CD4-positive, alpha-beta memory T cell (primary cell): ENCODE measurements at regions of chr15 and their contacts with region 1.

Region 1: DNA sequence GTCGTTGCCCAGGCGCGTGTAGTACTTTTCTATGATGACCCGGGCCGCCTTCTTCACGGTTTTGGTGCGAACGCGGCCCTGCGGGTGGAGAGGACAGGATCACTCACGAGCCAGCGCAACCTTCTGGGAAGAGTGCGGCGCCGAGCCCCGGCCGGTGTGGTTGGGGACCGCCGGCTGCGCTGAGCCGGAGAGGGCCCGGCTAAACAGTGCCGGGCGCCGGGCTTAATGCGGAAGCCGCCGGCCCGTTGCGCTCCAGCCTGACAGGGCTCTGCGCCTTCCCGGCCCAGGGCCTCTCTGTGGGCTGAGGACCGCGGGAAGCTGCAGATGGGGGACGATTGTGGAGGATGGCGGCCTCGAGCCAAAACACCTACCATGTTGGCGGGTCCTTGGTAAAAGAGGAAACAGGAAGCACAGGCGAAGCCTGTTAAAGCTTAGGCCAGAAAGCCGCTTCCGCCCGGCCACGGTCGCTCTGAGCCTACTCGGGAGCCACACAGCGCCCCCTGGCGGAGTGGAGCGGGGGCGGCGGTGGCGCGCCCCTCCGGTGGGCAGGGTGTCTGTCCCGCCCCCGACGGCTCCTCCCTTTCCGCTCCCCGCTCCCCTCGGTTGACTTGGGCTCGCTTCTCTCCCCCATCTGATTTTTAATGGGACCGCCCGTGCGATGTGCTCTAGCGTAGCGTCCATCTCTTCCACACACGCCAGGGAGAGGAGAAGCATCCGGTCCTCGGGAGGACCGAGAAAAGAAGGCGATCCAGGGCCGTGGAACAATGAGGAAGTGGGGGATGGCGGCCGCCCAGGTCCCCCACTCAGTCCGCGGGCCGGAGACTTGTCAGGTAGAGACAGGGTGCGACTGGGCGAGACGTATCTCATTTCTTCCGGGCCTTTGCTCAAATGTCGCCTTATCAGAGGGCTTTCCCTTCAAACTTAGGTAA is at the start of gene RPS17:
- DNase-seq: peak; percentile 96 to 99 (median 99)
- H3K4me3 ChIP-seq: peak within 1 kb of the TSS; percentile 73 to 91
- H3K4me3 Mint-ChIP-seq: peak within 1 kb of the TSS; percentile 95 to 99 (median 97)
- H3K27ac ChIP-seq: peak within 1 kb of the TSS; percentile 83
- H3K27ac Mint-ChIP-seq: peak within 1 kb of the TSS; percentile 94 to 98 (median 97)
- H3K4me1 ChIP-seq: peaks cover 26% of the 10 kb centered on the region
- H3K4me1 Mint-ChIP-seq: peaks cover 12 to 39% (median 25%) of the 10 kb centered on the region in 4 donors
- H3K27me3 ChIP-seq: no peaks in the 10 kb centered on the region
- H3K27me3 Mint-ChIP-seq: peaks cover 0 to 2% of the 10 kb centered on the region in 2 donors
- total RNA-seq, gene RPS17: 2,038 to 2,106 TPM

Region 2: GRCh38 chr15:81660976-81661375 is 879.3 kb before region 1 on chr15:
- CTCF ChIA-PET with region 1: no interaction called
- POLR2A ChIA-PET with region 1: no interaction called
- intact Hi-C with region 1: no loop called
- DNase-seq: no peak
- H3K4me3 ChIP-seq: no peak overlapping the region
- H3K4me3 Mint-ChIP-seq: no peak overlapping the region
- H3K27ac ChIP-seq: no peak overlapping the region
- H3K27ac Mint-ChIP-seq: no peak overlapping the region
- H3K4me1 ChIP-seq: no peaks in the 10 kb centered on the region
- H3K4me1 Mint-ChIP-seq: no peaks in the 10 kb centered on the region
- H3K27me3 ChIP-seq: no peaks in the 10 kb centered on the region
- H3K27me3 Mint-ChIP-seq: peaks cover 6 to 7% of the 10 kb centered on the region in 2 donors

Region 3: GRCh38 chr15:82312586-82313349 is 227.6 kb before region 1 on chr15:
- CTCF ChIA-PET with region 1: no interaction called
- POLR2A ChIA-PET with region 1: no interaction called
- intact Hi-C with region 1: no loop called
- DNase-seq: no peak
- H3K4me3 ChIP-seq: no peak overlapping the region
- H3K4me3 Mint-ChIP-seq: no peak overlapping the region
- H3K27ac ChIP-seq: no peak overlapping the region
- H3K27ac Mint-ChIP-seq: peak overlapping the region in 1 of 7 donors; percentile 32
- H3K4me1 ChIP-seq: no peaks in the 10 kb centered on the region
- H3K4me1 Mint-ChIP-seq: peaks cover 0 to 2% (median 0%) of the 10 kb centered on the region in 4 donors
- H3K27me3 ChIP-seq: no peaks in the 10 kb centered on the region
- H3K27me3 Mint-ChIP-seq: peaks cover 0 to 1% of the 10 kb centered on the region in 2 donors

Region 4: GRCh38 chr15:82393671-82394070 is 146.6 kb before region 1 on chr15:
- CTCF ChIA-PET with region 1: no interaction called
- POLR2A ChIA-PET with region 1: no interaction called
- intact Hi-C with region 1: no loop called
- DNase-seq: no peak
- H3K4me3 ChIP-seq: no peak overlapping the region
- H3K4me3 Mint-ChIP-seq: no peak overlapping the region
- H3K27ac ChIP-seq: no peak overlapping the region
- H3K27ac Mint-ChIP-seq: no peak overlapping the region
- H3K4me1 ChIP-seq: no peaks in the 10 kb centered on the region
- H3K4me1 Mint-ChIP-seq: peaks cover 0 to 16% (median 11%) of the 10 kb centered on the region in 4 donors
- H3K27me3 ChIP-seq: no peaks in the 10 kb centered on the region
- H3K27me3 Mint-ChIP-seq: no peaks in the 10 kb centered on the region

Region 5: DNA sequence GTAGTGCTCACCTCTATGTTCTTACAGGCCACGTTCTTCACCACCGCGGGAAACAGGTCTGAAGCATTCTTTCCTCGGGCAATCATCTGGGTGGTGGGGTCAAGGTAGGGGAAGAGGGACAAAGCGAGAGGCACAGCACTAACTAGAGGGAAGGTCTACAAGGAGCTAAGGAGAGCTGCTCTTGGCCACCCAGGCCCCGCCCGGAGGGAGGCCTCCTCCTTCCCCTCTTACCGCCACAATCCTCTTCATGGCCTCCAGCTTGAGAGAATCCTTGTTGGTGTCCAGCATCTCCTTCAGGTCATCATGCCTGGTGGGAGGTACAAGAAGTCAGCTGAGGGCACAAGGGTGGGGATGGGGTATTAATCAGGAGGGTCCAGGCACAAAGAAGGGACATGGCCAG is 148.8 kb after region 1 on chr15:
- CTCF ChIA-PET with region 1: no interaction called
- POLR2A ChIA-PET with region 1: no interaction called
- intact Hi-C with region 1: no loop called
- DNase-seq: no peak
- H3K4me3 ChIP-seq: no peak overlapping the region
- H3K4me3 Mint-ChIP-seq: no peak overlapping the region
- H3K27ac ChIP-seq: no peak overlapping the region
- H3K27ac Mint-ChIP-seq: no peak overlapping the region
- H3K4me1 ChIP-seq: no peaks in the 10 kb centered on the region
- H3K4me1 Mint-ChIP-seq: no peaks in the 10 kb centered on the region
- H3K27me3 ChIP-seq: no peaks in the 10 kb centered on the region
- H3K27me3 Mint-ChIP-seq: peaks cover 4 to 5% of the 10 kb centered on the region in 2 donors

Region 6: GRCh38 chr15:82749951-82750830 is 209.9 kb after region 1 on chr15:
- CTCF ChIA-PET with region 1: interaction called, 4 read pairs
- POLR2A ChIA-PET with region 1: interaction called, 32 read pairs
- intact Hi-C with region 1: loop called (anchors 1 kb)
- DNase-seq: peak; percentile 65 to 87 (median 73)
- H3K4me3 ChIP-seq: peak overlapping the region; percentile 82 to 86
- H3K4me3 Mint-ChIP-seq: peak overlapping the region; percentile 96 to 100 (median 99)
- H3K27ac ChIP-seq: peak overlapping the region; percentile 74
- H3K27ac Mint-ChIP-seq: peak overlapping the region; percentile 77 to 99 (median 95)
- H3K4me1 ChIP-seq: peaks cover 23% of the 10 kb centered on the region
- H3K4me1 Mint-ChIP-seq: peaks cover 26 to 55% (median 40%) of the 10 kb centered on the region in 4 donors
- H3K27me3 ChIP-seq: no peaks in the 10 kb centered on the region
- H3K27me3 Mint-ChIP-seq: no peaks in the 10 kb centered on the region

Region 7: GRCh38 chr15:82985688-82986441 is 445.5 kb after region 1 on chr15 and contains the start of gene RAMAC:
- CTCF ChIA-PET with region 1: interaction called, 12 read pairs
- POLR2A ChIA-PET with region 1: interaction called, 42 read pairs
- intact Hi-C with region 1: loop called (anchors 1 kb)
- DNase-seq: peak; percentile 90 to 98 (median 93)
- H3K4me3 ChIP-seq: peak within 1 kb of the TSS; percentile 87 to 91
- H3K4me3 Mint-ChIP-seq: peak within 1 kb of the TSS; percentile 96 to 99 (median 99)
- H3K27ac ChIP-seq: peak within 1 kb of the TSS; percentile 71
- H3K27ac Mint-ChIP-seq: peak within 1 kb of the TSS; percentile 91 to 99 (median 96)
- H3K4me1 ChIP-seq: peaks cover 18% of the 10 kb centered on the region
- H3K4me1 Mint-ChIP-seq: peaks cover 15 to 32% (median 25%) of the 10 kb centered on the region in 4 donors
- H3K27me3 ChIP-seq: no peaks in the 10 kb centered on the region
- H3K27me3 Mint-ChIP-seq: no peaks in the 10 kb centered on the region
- total RNA-seq, gene RAMAC: 19.3 to 22.0 TPM

Region 8: DNA sequence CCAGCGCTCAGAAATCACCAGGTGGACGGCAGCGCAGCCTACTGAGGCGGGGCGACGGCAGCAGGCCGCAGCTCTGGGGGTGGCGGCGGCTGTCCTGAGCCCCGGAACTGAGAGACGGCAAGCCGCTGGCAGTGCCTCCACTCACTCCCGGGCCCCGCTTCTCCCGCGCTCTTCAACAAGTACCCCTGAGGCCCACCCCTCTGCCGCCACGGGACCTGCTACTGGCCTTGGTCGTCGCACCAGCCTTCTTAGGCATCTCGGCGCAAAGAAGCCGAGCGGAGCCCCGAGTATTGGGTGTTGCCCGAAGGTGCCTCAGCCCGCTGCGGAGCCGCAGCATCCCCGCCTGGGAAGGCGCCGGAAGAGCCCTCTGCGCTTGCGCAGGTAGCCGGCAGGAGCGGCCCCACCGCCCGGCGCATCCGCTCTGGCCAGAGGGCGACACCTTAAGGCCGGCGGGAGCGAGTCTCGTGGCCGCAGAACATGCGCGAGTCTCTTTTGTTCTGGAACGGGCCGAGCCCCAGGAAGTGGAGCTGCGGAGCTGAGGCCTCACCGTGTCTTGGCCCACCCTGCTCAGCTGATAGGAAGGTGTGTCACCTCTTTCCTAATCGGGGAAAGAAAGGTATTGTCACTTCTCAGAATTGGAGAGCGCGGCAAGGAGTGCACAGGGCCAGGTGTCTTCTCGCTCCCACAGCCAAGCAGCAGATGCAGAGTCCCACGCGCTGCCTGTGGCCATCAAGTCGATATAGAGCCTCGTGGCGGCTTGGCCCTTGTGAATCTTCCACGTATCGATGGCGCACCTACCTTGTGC is 471.2 kb after region 1 on chr15 and contains the start of gene C15orf40:
- CTCF ChIA-PET with region 1: interaction called, 3 read pairs
- POLR2A ChIA-PET with region 1: interaction called, 24 read pairs
- intact Hi-C with region 1: no loop called
- DNase-seq: peak; percentile 82 to 89 (median 83)
- H3K4me3 ChIP-seq: peak within 1 kb of the TSS; percentile 70 to 92
- H3K4me3 Mint-ChIP-seq: peak within 1 kb of the TSS; percentile 95 to 100 (median 98)
- H3K27ac ChIP-seq: peak within 1 kb of the TSS; percentile 68
- H3K27ac Mint-ChIP-seq: peak within 1 kb of the TSS; percentile 85 to 97 (median 96)
- H3K4me1 ChIP-seq: peaks cover 35% of the 10 kb centered on the region
- H3K4me1 Mint-ChIP-seq: peaks cover 34 to 55% (median 46%) of the 10 kb centered on the region in 4 donors
- H3K27me3 ChIP-seq: no peaks in the 10 kb centered on the region
- H3K27me3 Mint-ChIP-seq: no peaks in the 10 kb centered on the region
- total RNA-seq, gene C15orf40: 47.0 to 48.5 TPM